ENCODE measurements at regions of chr3 and their contacts with region 1.

Region 1: DNA sequence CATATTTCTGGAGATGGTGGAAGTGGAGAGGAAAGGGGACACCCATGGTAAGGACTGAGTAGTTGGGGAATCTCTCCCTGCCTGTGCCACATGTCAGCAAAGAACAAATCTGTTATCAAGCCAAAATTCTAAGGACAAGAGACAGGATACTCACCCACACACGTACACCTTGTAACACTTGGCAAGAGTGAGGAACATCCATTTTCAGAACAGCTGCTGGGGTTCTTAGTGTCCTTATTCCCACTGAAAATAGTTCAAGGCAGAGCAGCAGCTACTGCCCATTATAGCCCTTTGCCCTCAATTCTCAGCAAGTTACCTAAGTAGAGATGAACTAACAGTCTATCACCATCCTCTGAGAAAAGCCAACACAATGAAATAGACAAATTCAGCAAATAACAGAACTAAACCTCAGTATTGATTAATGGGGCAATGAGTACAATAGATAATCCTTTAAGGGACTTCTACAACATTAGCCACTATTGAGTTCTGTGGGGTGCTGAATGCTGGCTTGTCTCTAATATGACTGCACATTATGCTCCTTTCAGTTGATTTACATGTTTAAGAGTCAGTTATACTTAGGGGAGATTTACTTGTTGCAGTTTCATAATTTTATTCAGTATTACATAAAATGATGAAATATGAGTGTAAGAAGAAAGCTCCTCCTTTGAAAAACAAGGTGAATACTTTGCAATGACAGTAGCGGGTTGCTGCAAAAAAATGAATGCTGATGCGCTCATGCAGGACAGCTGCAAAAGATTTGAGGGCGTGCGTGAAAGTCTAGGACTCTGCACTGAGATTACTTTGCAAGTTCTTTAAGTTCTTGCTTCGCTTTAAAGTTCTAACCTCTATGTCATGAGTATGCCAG is 22.4 kb downstream of the SENP5 start:
- DNase-seq: no peak
- ATAC-seq: no peak
- H3K4me3 ChIP-seq: no peak overlapping the region
- H3K27ac ChIP-seq: no peak overlapping the region
- H3K4me1 ChIP-seq: peaks cover 2% of the 10 kb centered on the region; the same call in 1 of the 2 replicates
- H3K27me3 ChIP-seq: no peaks in the 10 kb centered on the region
- CTCF ChIP-seq: no peak
- POLR2A ChIP-seq: no peak
- RAD21 ChIP-seq: no peak

Region 2: DNA sequence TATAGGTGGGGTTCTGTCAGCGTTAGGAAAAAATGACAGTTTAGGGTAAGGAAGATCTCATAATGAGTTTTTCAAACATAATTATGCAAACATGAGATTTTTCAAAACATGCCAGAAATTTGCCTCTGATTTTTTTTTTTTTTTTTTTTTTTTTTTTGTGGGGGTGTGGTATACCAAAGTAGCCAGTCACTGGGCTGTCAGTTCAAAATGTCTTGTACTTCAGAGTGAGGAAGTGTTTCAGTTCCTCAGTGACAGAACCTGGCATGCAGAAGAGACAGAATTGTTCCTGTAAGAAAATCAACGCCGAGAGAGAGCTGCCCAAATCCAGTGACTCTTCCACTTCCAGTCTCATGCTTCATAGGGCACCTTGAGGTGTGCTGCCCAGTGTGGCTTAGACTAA is 42.5 kb after region 1 on chr3:
- CTCF ChIA-PET with region 1: no interaction called
- POLR2A ChIA-PET with region 1: no interaction called
- dilution Hi-C with region 1: no loop called
- in situ Hi-C with region 1: no loop called
- intact Hi-C with region 1: loop called (anchors 5 kb)
- DNase-seq: no peak
- ATAC-seq: no peak
- H3K4me3 ChIP-seq: no peak overlapping the region
- H3K27ac ChIP-seq: no peak overlapping the region
- H3K4me1 ChIP-seq: no peaks in the 10 kb centered on the region
- H3K27me3 ChIP-seq: no peaks in the 10 kb centered on the region
- CTCF ChIP-seq: no peak
- POLR2A ChIP-seq: no peak
- RAD21 ChIP-seq: no peak

Measured in IMR-90 (cell line).